ENCODE measurements at regions of chr1 and their contacts with region 1.

Region 1: DNA sequence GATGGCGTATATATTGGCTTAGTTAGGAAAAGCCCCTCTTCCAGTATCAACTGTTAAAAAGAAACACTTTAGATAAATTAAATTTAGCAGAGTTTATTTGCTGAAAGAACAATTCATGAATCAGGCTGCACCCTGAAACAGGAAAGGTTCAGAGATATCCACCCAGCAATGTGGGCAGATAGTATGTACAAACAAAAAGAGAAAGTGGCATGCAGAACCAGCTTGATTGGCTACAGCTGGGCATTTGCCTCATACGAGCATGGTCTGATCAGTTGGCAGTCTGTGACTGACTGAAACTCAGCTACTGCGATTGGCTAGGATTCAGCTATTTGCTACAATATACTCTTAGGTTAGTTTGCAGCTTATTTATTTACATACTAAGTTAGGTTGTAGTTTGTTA is 98.2 kb downstream of the ZC3H11B start:
- DNase-seq: no peak
- ATAC-seq: no peak
- H3K4me3 ChIP-seq: no peak overlapping the region
- H3K4me3 Mint-ChIP-seq: no peak overlapping the region
- H3K27ac ChIP-seq: no peak overlapping the region
- H3K27ac Mint-ChIP-seq: no peak overlapping the region
- H3K4me1 ChIP-seq: no peaks in the 10 kb centered on the region
- H3K4me1 Mint-ChIP-seq: no peaks in the 10 kb centered on the region
- H3K27me3 ChIP-seq: no peaks in the 10 kb centered on the region
- H3K27me3 Mint-ChIP-seq: no peaks in the 10 kb centered on the region
- CTCF ChIP-seq: no peak

Region 2: GRCh38 chr1:219465212-219466093 is 49.3 kb before region 1 on chr1:
- CTCF ChIA-PET with region 1: no interaction called
- POLR2A ChIA-PET with region 1: no interaction called
- intact Hi-C with region 1: no loop called
- DNase-seq: no peak
- ATAC-seq: no peak
- H3K4me3 ChIP-seq: no peak overlapping the region
- H3K4me3 Mint-ChIP-seq: no peak overlapping the region
- H3K27ac ChIP-seq: no peak overlapping the region
- H3K27ac Mint-ChIP-seq: no peak overlapping the region
- H3K4me1 ChIP-seq: peaks cover 8 to 16% of the 10 kb centered on the region in 2 donors
- H3K4me1 Mint-ChIP-seq: peaks cover 27% of the 10 kb centered on the region
- H3K27me3 ChIP-seq: no peaks in the 10 kb centered on the region
- H3K27me3 Mint-ChIP-seq: no peaks in the 10 kb centered on the region
- CTCF ChIP-seq: no peak

Region 3: DNA sequence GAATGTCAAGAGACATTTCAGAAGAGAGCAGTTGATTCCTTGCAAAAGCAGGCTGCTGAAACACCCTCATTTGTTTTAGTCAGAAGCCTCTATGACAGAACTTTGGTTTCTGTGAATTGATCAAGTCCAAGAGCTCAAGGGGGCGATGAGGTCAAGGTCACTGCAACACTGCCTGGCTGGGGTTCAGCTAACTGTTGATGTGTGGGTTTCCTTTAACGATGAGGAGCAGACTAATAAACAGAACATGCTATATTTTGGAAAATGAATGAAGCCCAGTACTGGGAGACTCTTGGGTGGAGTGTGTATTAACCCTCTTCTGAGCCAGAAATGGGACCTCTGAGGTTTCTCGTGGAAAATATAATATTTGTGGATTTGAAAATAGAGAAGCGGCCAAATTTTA is 11.1 kb before region 1 on chr1:
- CTCF ChIA-PET with region 1: no interaction called
- POLR2A ChIA-PET with region 1: no interaction called
- intact Hi-C with region 1: loop called (anchors 1 kb)
- DNase-seq: no peak
- ATAC-seq: no peak
- H3K4me3 ChIP-seq: no peak overlapping the region
- H3K4me3 Mint-ChIP-seq: no peak overlapping the region
- H3K27ac ChIP-seq: no peak overlapping the region
- H3K27ac Mint-ChIP-seq: no peak overlapping the region
- H3K4me1 ChIP-seq: no peaks in the 10 kb centered on the region
- H3K4me1 Mint-ChIP-seq: no peaks in the 10 kb centered on the region
- H3K27me3 ChIP-seq: no peaks in the 10 kb centered on the region
- H3K27me3 Mint-ChIP-seq: peaks cover 7% of the 10 kb centered on the region
- CTCF ChIP-seq: no peak